ENCODE measurements at regions of chr2 and their contacts with region 1.

Region 1: GRCh38 chr2:63841254-63842022 is at the start of gene UGP2:
- DNase-seq: peak; percentile 83
- H3K4me3 Mint-ChIP-seq: peak within 1 kb of the TSS; percentile 99
- H3K27ac Mint-ChIP-seq: peak within 1 kb of the TSS; percentile 99
- H3K4me1 Mint-ChIP-seq: peaks cover 47% of the 10 kb centered on the region
- H3K27me3 Mint-ChIP-seq: no peaks in the 10 kb centered on the region
- total RNA-seq, gene UGP2: 60.3 and 65.9 TPM in 2 replicates

Region 2: DNA sequence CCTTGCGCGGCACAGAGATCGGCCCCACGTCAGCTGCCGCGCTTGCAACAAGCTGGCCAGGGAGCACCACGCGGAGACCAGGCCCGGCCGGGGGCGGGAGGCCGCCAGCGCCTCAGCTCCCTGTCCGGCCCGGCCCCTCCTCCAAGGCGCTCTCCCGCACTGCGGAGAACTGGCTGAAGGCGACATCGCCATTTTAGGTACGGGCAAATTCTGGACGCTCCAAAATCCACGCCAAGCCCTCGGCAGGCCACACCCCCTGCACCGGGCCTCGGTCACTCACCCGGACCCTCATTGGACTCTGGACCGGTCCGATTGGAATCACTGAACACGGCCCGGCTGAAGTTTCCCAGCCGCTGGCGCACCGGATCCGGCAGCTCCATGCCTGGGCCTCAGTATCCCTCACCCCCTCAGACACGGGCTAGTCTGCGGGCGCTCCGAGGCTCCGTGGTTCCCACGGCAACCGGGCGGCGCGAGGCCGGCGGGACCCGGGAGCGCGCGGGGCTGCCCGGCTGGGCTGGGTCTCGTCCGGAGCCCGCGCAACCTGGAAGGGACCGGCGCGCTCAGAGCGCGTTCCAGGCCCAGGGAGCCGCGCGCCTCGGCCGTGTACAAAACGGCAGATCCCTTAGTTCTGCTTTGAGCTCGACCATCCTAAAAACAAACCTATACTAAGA is 1335.6 kb before region 1 on chr2 and contains the start of gene TMEM17:
- intact Hi-C with region 1: loop called (anchors 5 kb)
- DNase-seq: peak; percentile 4
- H3K4me3 Mint-ChIP-seq: peak within 1 kb of the TSS; percentile 81
- H3K27ac Mint-ChIP-seq: peak within 1 kb of the TSS; percentile 21
- H3K4me1 Mint-ChIP-seq: peaks cover 11% of the 10 kb centered on the region
- H3K27me3 Mint-ChIP-seq: peaks cover 18% of the 10 kb centered on the region
- total RNA-seq, gene TMEM17: 0.15 and 0.23 TPM in 2 replicates

Region 3: DNA sequence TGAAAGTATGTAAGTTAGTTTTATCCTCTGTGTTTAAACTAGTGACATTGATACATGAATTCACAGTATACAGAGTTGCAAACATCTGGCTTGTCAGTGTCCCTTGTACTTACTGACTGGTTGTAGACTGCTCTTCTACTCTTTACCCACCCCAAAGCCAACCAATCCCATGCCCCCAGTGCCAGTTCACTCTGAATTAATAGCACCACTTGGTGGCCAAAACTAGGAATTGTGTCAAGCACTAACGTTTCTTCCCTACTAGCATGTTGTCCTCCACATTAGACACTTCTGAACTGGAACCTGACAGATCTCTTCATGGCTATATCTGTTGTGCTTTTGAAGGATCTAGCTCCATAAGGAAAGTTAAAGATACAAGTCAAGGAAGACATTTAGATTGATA is 818.0 kb before region 1 on chr2:
- intact Hi-C with region 1: no loop called
- DNase-seq: no peak
- H3K4me3 Mint-ChIP-seq: no peak overlapping the region
- H3K27ac Mint-ChIP-seq: no peak overlapping the region
- H3K4me1 Mint-ChIP-seq: no peaks in the 10 kb centered on the region
- H3K27me3 Mint-ChIP-seq: no peaks in the 10 kb centered on the region

Region 4: DNA sequence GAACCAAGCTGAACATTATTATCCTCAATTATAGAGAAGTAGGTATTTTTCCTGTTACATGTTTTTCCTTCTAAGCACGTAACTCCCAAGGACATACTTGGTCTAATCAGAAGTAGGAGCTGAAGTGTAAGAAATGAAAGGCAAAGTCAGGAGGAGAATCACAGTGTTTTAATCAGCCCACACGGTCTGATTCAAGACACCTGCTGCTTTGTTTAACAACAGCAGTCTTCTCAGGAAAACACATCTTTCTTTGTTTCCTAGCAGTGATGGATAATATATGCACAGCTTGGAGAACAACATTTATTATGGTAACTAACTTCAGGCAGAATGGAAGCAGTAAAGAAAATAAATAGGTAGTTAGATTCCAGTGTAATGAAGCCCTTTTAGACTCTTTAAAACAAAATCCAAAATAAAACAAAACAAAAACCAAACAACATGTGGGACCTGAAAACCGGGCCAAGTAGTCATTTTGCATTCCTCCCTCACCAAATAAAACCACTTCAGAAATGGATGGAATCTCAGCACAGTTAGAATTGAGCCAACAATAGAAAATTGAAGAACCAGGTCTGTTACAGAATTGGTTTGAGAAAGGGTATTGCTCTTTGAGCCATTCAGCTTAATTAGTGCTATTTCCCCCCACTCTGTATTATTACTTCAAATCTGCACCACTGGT is 60.8 kb before region 1 on chr2:
- intact Hi-C with region 1: no loop called
- DNase-seq: no peak
- H3K4me3 Mint-ChIP-seq: no peak overlapping the region
- H3K27ac Mint-ChIP-seq: no peak overlapping the region
- H3K4me1 Mint-ChIP-seq: no peaks in the 10 kb centered on the region
- H3K27me3 Mint-ChIP-seq: no peaks in the 10 kb centered on the region

Region 5: GRCh38 chr2:63856303-63856603 is 14.8 kb after region 1 on chr2:
- intact Hi-C with region 1: loop called (anchors 1 kb)
- DNase-seq: peak; percentile 26
- H3K4me3 Mint-ChIP-seq: peak overlapping the region; percentile 69
- H3K27ac Mint-ChIP-seq: peak overlapping the region; percentile 85
- H3K4me1 Mint-ChIP-seq: peaks cover 61% of the 10 kb centered on the region
- H3K27me3 Mint-ChIP-seq: no peaks in the 10 kb centered on the region

Region 6: DNA sequence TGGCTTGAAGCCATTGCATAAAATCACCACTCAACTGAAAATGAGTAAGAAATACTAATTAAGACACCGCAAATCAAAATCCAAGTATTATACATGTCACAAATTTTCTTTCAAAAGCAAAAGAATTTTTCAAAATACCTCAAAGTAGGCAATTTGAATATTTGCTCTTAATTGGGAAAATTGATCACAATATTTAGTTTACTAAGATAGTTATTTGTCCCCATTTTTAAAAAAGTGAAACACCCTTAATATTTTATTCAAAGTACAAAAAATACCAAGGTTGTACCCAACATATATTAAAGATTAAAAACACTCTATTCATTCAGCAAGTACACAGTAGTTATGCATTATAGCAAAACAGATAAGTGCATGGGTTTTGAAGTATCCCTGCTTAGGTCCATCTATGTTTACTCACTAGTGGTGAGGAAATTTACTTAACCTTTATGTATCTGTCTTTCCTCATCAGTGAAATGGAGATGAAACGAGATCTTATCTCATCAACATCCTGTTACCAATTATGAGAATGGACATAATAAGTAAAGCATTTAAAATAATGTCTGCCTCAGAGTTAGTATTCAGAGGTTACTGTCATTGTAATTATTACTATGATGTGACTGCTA is 142.7 kb after region 1 on chr2:
- intact Hi-C with region 1: no loop called
- DNase-seq: no peak
- H3K4me3 Mint-ChIP-seq: no peak overlapping the region
- H3K27ac Mint-ChIP-seq: no peak overlapping the region
- H3K4me1 Mint-ChIP-seq: peaks cover 24% of the 10 kb centered on the region
- H3K27me3 Mint-ChIP-seq: no peaks in the 10 kb centered on the region

Region 7: DNA sequence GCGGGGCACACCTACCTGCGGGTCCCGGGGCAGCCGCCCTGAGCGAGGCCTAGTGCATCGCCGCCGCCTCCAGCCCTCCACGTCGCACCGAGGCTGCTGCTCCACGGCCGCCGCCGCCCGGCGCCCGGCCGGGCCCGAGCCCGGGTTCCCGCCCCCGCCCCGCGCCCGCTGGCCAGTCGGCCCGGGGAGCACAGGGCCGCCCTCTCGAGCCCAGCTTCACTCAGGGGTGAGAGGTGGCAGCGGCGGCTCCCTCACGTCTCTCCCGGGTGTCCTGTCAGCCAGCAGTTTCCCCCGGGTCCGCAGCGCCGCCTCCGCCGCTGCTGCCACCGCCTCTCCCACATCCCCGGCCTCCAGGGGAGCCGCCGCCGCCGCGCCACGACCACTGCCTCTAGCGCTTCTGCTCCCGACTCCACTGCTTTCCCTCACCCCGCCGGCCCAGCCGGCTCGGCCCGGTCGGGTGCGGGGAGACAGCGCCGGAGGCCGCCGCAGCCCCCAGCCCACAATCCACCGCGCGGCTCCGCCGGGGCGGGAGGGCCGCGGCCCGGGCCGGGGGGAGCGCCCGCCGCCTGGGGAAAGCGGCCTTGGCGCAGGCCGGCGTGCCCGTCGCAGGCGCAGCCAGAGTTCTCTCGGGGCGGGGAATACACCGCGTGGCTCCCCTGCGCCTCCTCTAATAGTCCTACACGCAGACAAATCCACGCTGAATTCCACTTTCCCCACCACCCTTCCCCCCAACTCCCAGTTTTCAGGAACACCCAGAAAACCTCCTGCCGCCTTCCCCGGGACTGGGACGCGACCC is 177.7 kb after region 1 on chr2 and contains the start of gene VPS54:
- intact Hi-C with region 1: loop called (anchors 2 kb)
- DNase-seq: peak; percentile 53
- H3K4me3 Mint-ChIP-seq: peak within 1 kb of the TSS; percentile 94
- H3K27ac Mint-ChIP-seq: peak within 1 kb of the TSS; percentile 97
- H3K4me1 Mint-ChIP-seq: peaks cover 43% of the 10 kb centered on the region
- H3K27me3 Mint-ChIP-seq: no peaks in the 10 kb centered on the region
- total RNA-seq, gene VPS54: 14.9 and 15.4 TPM in 2 replicates

Region 8: GRCh38 chr2:64538764-64539433 is 697.5 kb after region 1 on chr2:
- intact Hi-C with region 1: loop called (anchors 5 kb)
- DNase-seq: no peak
- H3K4me3 Mint-ChIP-seq: peak overlapping the region; percentile 45
- H3K27ac Mint-ChIP-seq: peak overlapping the region; percentile 71
- H3K4me1 Mint-ChIP-seq: peaks cover 74% of the 10 kb centered on the region
- H3K27me3 Mint-ChIP-seq: no peaks in the 10 kb centered on the region

Region 9: DNA sequence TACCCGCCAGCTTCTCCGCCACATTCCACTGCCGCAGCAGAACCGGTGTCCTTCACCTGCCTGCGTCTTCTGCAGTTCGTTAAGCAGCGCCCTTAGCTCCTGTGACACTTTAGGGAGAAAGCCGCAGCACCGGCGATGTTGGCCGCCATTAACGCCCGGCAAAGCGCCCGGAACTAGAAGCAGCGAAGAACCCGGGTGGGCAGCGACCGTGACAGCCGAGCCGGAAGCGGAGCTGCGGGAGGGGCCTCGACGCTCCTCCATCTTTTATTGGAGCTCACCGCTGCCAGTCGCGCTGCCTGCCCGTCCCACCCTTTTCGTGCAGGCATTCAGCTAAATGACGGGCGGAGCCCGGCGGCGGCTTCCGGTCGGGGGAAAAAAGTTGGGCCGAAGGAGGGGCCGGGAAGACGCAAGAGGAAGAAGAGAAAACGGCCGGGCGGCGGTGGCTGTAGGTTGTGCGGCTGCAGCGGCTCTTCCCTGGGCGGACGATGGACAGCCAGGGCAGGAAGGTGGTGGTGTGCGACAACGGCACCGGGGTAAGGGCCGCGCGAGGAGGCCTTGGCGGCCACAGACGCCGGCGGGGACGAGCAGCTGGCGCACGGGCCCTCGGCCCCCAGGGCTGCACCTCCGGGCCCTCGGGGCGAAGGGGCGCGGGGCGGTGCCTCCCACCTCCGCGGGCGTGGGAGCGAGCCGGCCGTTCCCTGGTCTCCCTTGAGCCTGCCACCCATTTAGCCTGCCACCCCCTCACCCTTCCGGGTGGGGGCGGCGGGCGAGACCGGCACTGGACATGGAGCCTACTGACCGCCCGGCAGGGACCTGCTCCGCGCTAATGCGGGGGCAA is 1386.2 kb after region 1 on chr2 and contains the start of gene ACTR2:
- intact Hi-C with region 1: loop called (anchors 5 kb)
- DNase-seq: peak; percentile 95
- H3K4me3 Mint-ChIP-seq: peak within 1 kb of the TSS; percentile 98
- H3K27ac Mint-ChIP-seq: peak within 1 kb of the TSS; percentile 99
- H3K4me1 Mint-ChIP-seq: peaks cover 36% of the 10 kb centered on the region
- H3K27me3 Mint-ChIP-seq: no peaks in the 10 kb centered on the region
- total RNA-seq, gene ACTR2: 285 and 295 TPM in 2 replicates

Measured in activated T-helper 1 cell treated with anti-CD3 and anti-CD28 coated beads, Interleukin-12 subunit alpha, Interleukin-12 subunit beta, Interleukin-2, Interleukin-4 antibody, amounts not matched to agents 30 ng/mL and 10 ng/mL and 1 ng/mL, durations not matched to agents 14 hours and 24 hours and 36 hours (primary cell).